B cell (primary cell): ENCODE measurements at regions of chr3 and their contacts with region 1.

Region 1: GRCh38 chr3:46186471-46187340 is 21.4 kb downstream of the CCR1 start:
- DNase-seq: peak; percentile 81
- ATAC-seq: peak; percentile 87
- H3K4me3 ChIP-seq: peak overlapping the region in 1 of 5 experiments; percentile 34
- H3K4me3 Mint-ChIP-seq: peak overlapping the region; percentile 59
- H3K27ac ChIP-seq: peak overlapping the region; percentile 30 to 53
- H3K27ac Mint-ChIP-seq: peak overlapping the region; percentile 62
- H3K4me1 ChIP-seq: peaks cover 39 to 43% of the 10 kb centered on the region in 2 donors
- H3K4me1 Mint-ChIP-seq: peaks cover 58% of the 10 kb centered on the region
- H3K27me3 ChIP-seq: no peaks in the 10 kb centered on the region
- H3K27me3 Mint-ChIP-seq: no peaks in the 10 kb centered on the region
- CTCF ChIP-seq: no peak

Region 2: DNA sequence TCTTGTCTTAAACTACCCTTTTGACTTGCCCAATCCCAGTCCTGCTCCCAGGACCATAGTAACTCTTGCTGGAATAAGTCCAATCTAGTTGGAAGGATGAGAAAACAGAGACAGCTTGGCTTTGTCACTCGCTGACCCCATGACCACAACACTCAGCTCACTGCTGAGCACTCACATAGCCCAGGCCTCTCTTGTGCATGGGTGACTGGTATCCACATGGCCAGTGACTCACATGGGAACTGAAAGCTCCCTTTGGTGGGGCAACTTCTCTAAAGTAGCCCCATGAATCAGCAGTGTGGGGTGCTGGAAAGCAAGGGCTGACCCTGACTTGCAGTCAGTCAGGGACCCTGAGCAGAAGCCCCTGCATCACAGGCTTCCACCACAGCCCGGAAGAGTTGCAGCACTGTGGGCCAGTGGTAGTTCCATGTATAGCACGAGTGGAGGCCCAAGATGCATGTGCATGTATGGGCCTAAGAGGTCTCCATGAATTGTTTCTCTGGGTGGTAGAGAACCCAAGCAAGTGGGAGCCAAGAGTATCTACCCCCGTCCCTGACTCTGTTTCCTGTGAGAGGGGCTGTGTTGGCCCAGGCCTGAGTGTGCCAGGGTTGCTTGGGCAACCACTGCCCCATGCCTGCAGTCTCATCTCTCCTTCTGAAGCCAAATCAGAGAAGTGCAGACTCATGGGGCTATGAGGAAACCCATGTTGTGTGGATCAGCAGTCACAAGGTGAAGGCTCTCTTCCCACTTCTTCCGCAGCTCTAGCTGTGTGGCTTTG is 97.3 kb before region 1 on chr3:
- CTCF ChIA-PET with region 1: interaction called, 3 read pairs
- POLR2A ChIA-PET with region 1: interaction called, 14 read pairs
- intact Hi-C with region 1: no loop called
- DNase-seq: peak; percentile 52
- ATAC-seq: peak; percentile 66
- H3K4me3 ChIP-seq: no peak overlapping the region
- H3K4me3 Mint-ChIP-seq: no peak overlapping the region
- H3K27ac ChIP-seq: no peak overlapping the region
- H3K27ac Mint-ChIP-seq: peak overlapping the region; percentile 29
- H3K4me1 ChIP-seq: peaks cover 50 to 58% of the 10 kb centered on the region in 2 donors
- H3K4me1 Mint-ChIP-seq: peaks cover 59% of the 10 kb centered on the region
- H3K27me3 ChIP-seq: no peaks in the 10 kb centered on the region
- H3K27me3 Mint-ChIP-seq: no peaks in the 10 kb centered on the region
- CTCF ChIP-seq: no peak

Region 3: GRCh38 chr3:46098319-46098761 is 88.4 kb before region 1 on chr3:
- CTCF ChIA-PET with region 1: no interaction called
- POLR2A ChIA-PET with region 1: interaction called, 14 read pairs
- intact Hi-C with region 1: loop called (anchors 1 kb)
- DNase-seq: peak; percentile 58
- ATAC-seq: peak; percentile 13
- H3K4me3 ChIP-seq: peak overlapping the region in 3 of 5 experiments; percentile 27 to 46 (median 37)
- H3K4me3 Mint-ChIP-seq: peak overlapping the region; percentile 73
- H3K27ac ChIP-seq: peak overlapping the region; percentile 30 to 65
- H3K27ac Mint-ChIP-seq: peak overlapping the region; percentile 95
- H3K4me1 ChIP-seq: peaks cover 61 to 68% of the 10 kb centered on the region in 2 donors
- H3K4me1 Mint-ChIP-seq: peaks cover 69% of the 10 kb centered on the region
- H3K27me3 ChIP-seq: no peaks in the 10 kb centered on the region
- H3K27me3 Mint-ChIP-seq: no peaks in the 10 kb centered on the region
- CTCF ChIP-seq: no peak

Region 4: GRCh38 chr3:46110701-46111493 is 75.8 kb before region 1 on chr3:
- CTCF ChIA-PET with region 1: no interaction called
- POLR2A ChIA-PET with region 1: no interaction called
- intact Hi-C with region 1: no loop called
- DNase-seq: no peak
- ATAC-seq: no peak
- H3K4me3 ChIP-seq: no peak overlapping the region
- H3K4me3 Mint-ChIP-seq: no peak overlapping the region
- H3K27ac ChIP-seq: no peak overlapping the region
- H3K27ac Mint-ChIP-seq: no peak overlapping the region
- H3K4me1 ChIP-seq: peaks cover 10 to 15% of the 10 kb centered on the region in 2 donors
- H3K4me1 Mint-ChIP-seq: peaks cover 26% of the 10 kb centered on the region
- H3K27me3 ChIP-seq: no peaks in the 10 kb centered on the region
- H3K27me3 Mint-ChIP-seq: no peaks in the 10 kb centered on the region
- CTCF ChIP-seq: no peak

Region 5: GRCh38 chr3:46222435-46223161 is 35.9 kb after region 1 on chr3:
- CTCF ChIA-PET with region 1: no interaction called
- POLR2A ChIA-PET with region 1: no interaction called
- intact Hi-C with region 1: loop called (anchors 2 kb)
- DNase-seq: peak; percentile 66
- ATAC-seq: peak; percentile 72
- H3K4me3 ChIP-seq: no peak overlapping the region
- H3K4me3 Mint-ChIP-seq: peak overlapping the region; percentile 60
- H3K27ac ChIP-seq: peak overlapping the region; percentile 44 to 50
- H3K27ac Mint-ChIP-seq: peak overlapping the region; percentile 74
- H3K4me1 ChIP-seq: peaks cover 35 to 41% of the 10 kb centered on the region in 2 donors
- H3K4me1 Mint-ChIP-seq: peaks cover 49% of the 10 kb centered on the region
- H3K27me3 ChIP-seq: no peaks in the 10 kb centered on the region
- H3K27me3 Mint-ChIP-seq: no peaks in the 10 kb centered on the region
- CTCF ChIP-seq: no peak

Region 6: DNA sequence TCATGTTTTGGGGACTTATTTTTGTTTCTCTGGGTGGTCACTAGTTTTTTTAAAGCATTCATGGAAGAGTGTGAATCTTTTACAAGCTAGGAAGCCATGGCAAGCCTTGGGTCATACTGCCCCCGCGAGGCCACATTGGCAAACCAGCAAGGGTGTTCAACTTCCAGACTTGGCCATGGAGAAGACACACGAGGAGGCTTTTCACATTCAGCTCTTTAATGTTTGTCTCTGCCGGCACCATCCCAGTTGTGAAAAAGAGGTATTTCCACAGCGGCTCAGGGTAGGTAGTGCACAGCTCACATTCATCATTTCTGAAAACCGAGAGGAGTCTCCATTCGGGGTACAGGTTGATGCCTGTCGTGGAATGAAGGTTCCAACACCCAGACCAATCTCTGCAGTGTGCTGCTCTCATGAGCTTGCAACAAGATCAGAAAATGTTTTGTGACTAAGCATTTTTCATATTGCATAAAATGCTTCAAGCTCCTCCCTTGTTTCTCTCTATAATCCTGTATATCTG is 191.8 kb after region 1 on chr3:
- CTCF ChIA-PET with region 1: interaction called, 11 read pairs
- POLR2A ChIA-PET with region 1: no interaction called
- intact Hi-C with region 1: no loop called
- DNase-seq: peak; percentile 64
- ATAC-seq: peak; percentile 51
- H3K4me3 ChIP-seq: no peak overlapping the region
- H3K4me3 Mint-ChIP-seq: no peak overlapping the region
- H3K27ac ChIP-seq: no peak overlapping the region
- H3K27ac Mint-ChIP-seq: peak overlapping the region; percentile 5
- H3K4me1 ChIP-seq: peaks cover 24 to 30% of the 10 kb centered on the region in 2 donors
- H3K4me1 Mint-ChIP-seq: peaks cover 41% of the 10 kb centered on the region
- H3K27me3 ChIP-seq: peaks cover 0 to 2% (median 0%) of the 10 kb centered on the region in 4 experiments
- H3K27me3 Mint-ChIP-seq: peaks cover 3% of the 10 kb centered on the region
- CTCF ChIP-seq: peak; percentile 72